ENCODE measurements at regions of chr9 and their contacts with region 1.

Region 1: GRCh38 chr9:100437860-100438805 is 11.2 kb downstream of the MSANTD3 start:
- DNase-seq: peak; percentile 58
- H3K4me3 ChIP-seq: no peak overlapping the region; a peak in 1 of 4 replicates
- H3K27ac ChIP-seq: no peak overlapping the region; a peak in 1 of 4 replicates
- H3K4me1 ChIP-seq: peaks cover 0 to 3% of the 10 kb centered on the region in 2 experiments; a peak in 1 of 4 replicates
- H3K27me3 ChIP-seq: no peaks in the 10 kb centered on the region
- CTCF ChIP-seq: peak; percentile 95
- EP300 ChIP-seq: no peak
- RAD21 ChIP-seq: peak; percentile 73

Region 2: GRCh38 chr9:100426530-100427428 is 11.4 kb before region 1 on chr9 and contains the start of gene MSANTD3:
- CTCF ChIA-PET with region 1: interaction called, 29 read pairs
- POLR2A ChIA-PET with region 1: no interaction called
- DNase-seq: peak; percentile 94
- H3K4me3 ChIP-seq: peak within 1 kb of the TSS; percentile 73 to 88
- H3K27ac ChIP-seq: peak within 1 kb of the TSS; percentile 92 to 99
- H3K4me1 ChIP-seq: peaks cover 9 to 22% of the 10 kb centered on the region in 2 experiments; a peak in 3 of 4 replicates
- H3K27me3 ChIP-seq: no peaks in the 10 kb centered on the region
- CTCF ChIP-seq: peak; percentile 13; the same call in 1 of the 2 replicates
- EP300 ChIP-seq: peak in 1 of 2 experiments; percentile 14; a peak in 1 of 4 replicates
- RAD21 ChIP-seq: 0 out of 2 replicates have a peak, but pooled peaks have one; percentile 1
- polyA plus RNA-seq, gene MSANTD3: 42.3 and 48.3 TPM in 2 replicates

Region 3: GRCh38 chr9:100472788-100473275 is 34.7 kb after region 1 on chr9 and contains the start of gene TMEFF1:
- CTCF ChIA-PET with region 1: interaction called, 10 read pairs
- POLR2A ChIA-PET with region 1: no interaction called
- DNase-seq: peak; percentile 97
- H3K4me3 ChIP-seq: peak within 1 kb of the TSS; percentile 77 to 82
- H3K27ac ChIP-seq: peak within 1 kb of the TSS in 1 of 2 experiments; percentile 51; a peak in 1 of 4 replicates
- H3K4me1 ChIP-seq: peaks cover 0 to 10% of the 10 kb centered on the region in 2 experiments; a peak in 2 of 4 replicates
- H3K27me3 ChIP-seq: no peaks in the 10 kb centered on the region
- CTCF ChIP-seq: peak; percentile 39
- EP300 ChIP-seq: no peak
- RAD21 ChIP-seq: no peak
- polyA plus RNA-seq, gene TMEFF1: 2.1 and 2.5 TPM in 2 replicates

Region 4: DNA sequence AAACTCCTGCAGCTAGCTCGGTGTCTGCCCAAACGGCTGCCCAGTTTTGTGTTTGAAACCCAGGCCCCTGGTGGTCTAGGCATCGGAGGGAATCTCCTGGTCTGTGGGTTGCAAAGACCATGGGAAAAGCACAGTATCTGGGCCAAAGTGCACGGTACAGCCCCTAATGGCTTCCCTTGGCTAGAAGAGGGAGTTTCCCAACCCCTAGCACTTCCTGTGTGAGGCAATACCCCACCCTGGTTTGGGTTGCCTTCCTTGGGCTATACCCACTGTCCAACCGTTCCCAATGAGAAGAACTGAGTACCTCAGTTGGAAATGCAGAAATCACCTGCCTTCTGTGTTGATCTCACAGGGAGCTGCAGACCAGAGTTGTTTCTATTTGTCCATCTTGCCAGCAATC is 181.5 kb after region 1 on chr9:
- CTCF ChIA-PET with region 1: no interaction called
- POLR2A ChIA-PET with region 1: no interaction called
- DNase-seq: no peak
- H3K4me3 ChIP-seq: no peak overlapping the region
- H3K27ac ChIP-seq: no peak overlapping the region
- H3K4me1 ChIP-seq: no peaks in the 10 kb centered on the region
- H3K27me3 ChIP-seq: no peaks in the 10 kb centered on the region
- CTCF ChIP-seq: no peak
- EP300 ChIP-seq: no peak
- RAD21 ChIP-seq: no peak